ENCODE measurements at regions of chr7 and their contacts with region 1.

Region 1: DNA sequence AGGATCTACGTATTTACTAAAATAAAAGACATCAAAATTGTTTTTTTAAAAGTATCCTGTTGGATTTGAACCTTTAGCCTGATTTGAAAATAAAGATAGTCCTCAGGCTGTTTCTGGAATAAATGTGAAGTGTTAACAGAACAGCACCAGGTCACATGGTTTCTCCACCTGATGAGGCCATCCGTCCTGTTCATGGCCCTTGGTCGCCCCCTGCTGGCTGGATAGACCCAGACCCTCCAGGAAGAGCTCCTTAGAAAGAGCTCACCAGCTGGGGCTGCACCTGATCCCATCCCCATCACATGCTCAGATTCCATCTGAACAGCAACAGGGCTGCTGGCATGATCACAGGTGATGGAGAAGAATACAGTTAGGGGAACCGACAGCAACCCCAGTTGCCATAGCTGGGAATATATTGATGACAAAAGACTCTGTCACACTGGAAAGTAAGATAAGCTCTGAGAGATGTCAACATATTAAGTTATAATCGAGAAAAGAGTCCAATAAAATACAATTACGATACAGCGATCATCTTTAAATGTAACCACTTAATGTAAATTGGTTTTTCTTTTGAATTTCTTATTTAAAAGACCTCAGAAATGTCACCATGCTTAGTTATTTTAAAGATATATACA is 4.8 kb downstream of the OR2A14 start:
- DNase-seq: peak; percentile 97
- ATAC-seq: peak; percentile 99
- H3K4me3 Mint-ChIP-seq: no peak overlapping the region
- H3K27ac Mint-ChIP-seq: no peak overlapping the region
- H3K4me1 Mint-ChIP-seq: no peaks in the 10 kb centered on the region
- H3K27me3 Mint-ChIP-seq: no peaks in the 10 kb centered on the region; the same call in 1 of the 2 replicates
- CTCF ChIP-seq: peak; percentile 79

Region 2: GRCh38 chr7:143892527-143893300 is 235.1 kb before region 1 on chr7:
- CTCF ChIA-PET with region 1: interaction called, 12 read pairs
- POLR2A ChIA-PET with region 1: no interaction called
- DNase-seq: no peak
- ATAC-seq: peak; percentile 95
- H3K4me3 Mint-ChIP-seq: no peak overlapping the region
- H3K27ac Mint-ChIP-seq: no peak overlapping the region
- H3K4me1 Mint-ChIP-seq: peaks cover 6% of the 10 kb centered on the region; the same call in 1 of the 2 replicates
- H3K27me3 Mint-ChIP-seq: no peaks in the 10 kb centered on the region
- CTCF ChIP-seq: 0 out of 2 replicates have a peak, but pooled peaks have one; percentile 16

Region 3: DNA sequence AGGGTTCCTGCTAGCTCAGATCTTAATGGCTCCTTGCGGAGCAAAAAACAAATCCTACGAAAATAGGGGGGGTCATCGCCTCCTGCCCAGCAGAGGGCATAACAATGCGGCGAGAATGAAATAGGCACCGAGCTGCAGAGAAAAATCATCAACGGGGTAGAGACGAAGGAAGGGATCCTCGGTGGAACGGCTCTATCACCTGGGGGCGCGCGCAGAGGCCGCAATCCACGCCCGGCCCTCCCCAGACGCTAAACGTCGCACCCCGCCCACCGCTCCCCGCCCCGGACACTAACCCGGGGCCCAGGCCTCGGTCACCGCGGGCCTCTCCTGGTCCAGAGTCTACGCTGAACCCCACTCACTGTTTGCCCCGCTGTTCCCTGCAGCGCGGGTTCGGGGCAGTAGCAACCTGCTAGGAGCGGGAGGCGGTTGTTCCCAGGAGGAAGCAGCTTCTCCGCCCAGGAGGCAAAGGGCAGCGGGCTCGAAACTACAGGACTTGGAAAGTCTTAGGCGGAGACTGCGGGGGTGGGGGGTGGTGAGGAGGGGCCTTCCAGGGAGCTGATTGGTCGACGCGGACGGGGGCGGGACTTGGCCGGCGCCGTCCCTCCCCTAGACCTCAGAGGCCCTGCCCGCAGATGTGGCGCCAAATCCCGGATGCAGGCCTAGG is 226.0 kb before region 1 on chr7 and contains the start of gene TCAF1:
- CTCF ChIA-PET with region 1: interaction called, 26 read pairs
- POLR2A ChIA-PET with region 1: interaction called, 3 read pairs
- DNase-seq: peak; percentile 95
- ATAC-seq: peak; percentile 89
- H3K4me3 Mint-ChIP-seq: peak within 1 kb of the TSS; percentile 95
- H3K27ac Mint-ChIP-seq: peak within 1 kb of the TSS; percentile 99
- H3K4me1 Mint-ChIP-seq: peaks cover 70% of the 10 kb centered on the region
- H3K27me3 Mint-ChIP-seq: peaks cover 4% of the 10 kb centered on the region; the same call in 1 of the 2 replicates
- CTCF ChIP-seq: no peak
- total RNA-seq, gene TCAF1: 39.8 to 52.7 TPM (median 42.0 TPM) in 3 replicates

Region 4: GRCh38 chr7:144032985-144033709 is 94.7 kb before region 1 on chr7:
- CTCF ChIA-PET with region 1: interaction called, 11 read pairs
- POLR2A ChIA-PET with region 1: no interaction called
- DNase-seq: no peak
- ATAC-seq: no peak
- H3K4me3 Mint-ChIP-seq: no peak overlapping the region
- H3K27ac Mint-ChIP-seq: no peak overlapping the region
- H3K4me1 Mint-ChIP-seq: peaks cover 5% of the 10 kb centered on the region; the same call in 1 of the 2 replicates
- H3K27me3 Mint-ChIP-seq: no peaks in the 10 kb centered on the region
- CTCF ChIP-seq: no peak

Region 5: DNA sequence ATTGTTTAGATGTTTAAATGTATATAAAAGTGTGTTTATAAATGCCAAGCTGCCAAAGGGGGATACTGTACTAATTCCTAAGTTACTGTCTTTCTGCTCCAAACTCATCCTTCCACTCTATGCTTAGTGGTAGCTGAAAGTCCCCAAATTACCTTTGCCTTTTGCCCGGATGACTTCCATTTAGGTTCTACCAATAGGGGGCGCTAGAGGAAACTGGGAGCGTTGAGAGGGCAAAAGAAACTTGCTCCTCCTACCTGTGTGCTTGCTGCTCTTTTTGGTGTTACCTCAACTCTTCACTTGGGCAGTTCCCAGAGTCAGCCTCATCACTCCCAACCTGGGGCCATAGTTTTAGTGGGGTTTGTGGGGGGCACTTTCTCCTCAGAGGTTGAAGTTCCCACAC is 64.1 kb before region 1 on chr7:
- CTCF ChIA-PET with region 1: interaction called, 11 read pairs
- POLR2A ChIA-PET with region 1: no interaction called
- DNase-seq: peak; percentile 45
- ATAC-seq: peak; percentile 81
- H3K4me3 Mint-ChIP-seq: no peak overlapping the region
- H3K27ac Mint-ChIP-seq: no peak overlapping the region
- H3K4me1 Mint-ChIP-seq: peaks cover 7% of the 10 kb centered on the region
- H3K27me3 Mint-ChIP-seq: peaks cover 4% of the 10 kb centered on the region; the same call in 1 of the 2 replicates
- CTCF ChIP-seq: peak; percentile 71

Measured in WTC11 (cell line).